CD4-positive, alpha-beta memory T cell (primary cell): ENCODE measurements at regions of chr5 and their contacts with region 1.

Region 1: GRCh38 chr5:141992349-141992963 is 20.4 kb downstream of the GNPDA1 start:
- DNase-seq: peak; percentile 67 to 74 (median 70)
- H3K4me3 ChIP-seq: no peak overlapping the region
- H3K4me3 Mint-ChIP-seq: no peak overlapping the region
- H3K27ac ChIP-seq: no peak overlapping the region
- H3K27ac Mint-ChIP-seq: peak overlapping the region in 3 of 7 donors; percentile 9 to 71 (median 60)
- H3K4me1 ChIP-seq: no peaks in the 10 kb centered on the region
- H3K4me1 Mint-ChIP-seq: peaks cover 3 to 7% (median 4%) of the 10 kb centered on the region in 4 donors
- H3K27me3 ChIP-seq: no peaks in the 10 kb centered on the region
- H3K27me3 Mint-ChIP-seq: no peaks in the 10 kb centered on the region

Region 2: DNA sequence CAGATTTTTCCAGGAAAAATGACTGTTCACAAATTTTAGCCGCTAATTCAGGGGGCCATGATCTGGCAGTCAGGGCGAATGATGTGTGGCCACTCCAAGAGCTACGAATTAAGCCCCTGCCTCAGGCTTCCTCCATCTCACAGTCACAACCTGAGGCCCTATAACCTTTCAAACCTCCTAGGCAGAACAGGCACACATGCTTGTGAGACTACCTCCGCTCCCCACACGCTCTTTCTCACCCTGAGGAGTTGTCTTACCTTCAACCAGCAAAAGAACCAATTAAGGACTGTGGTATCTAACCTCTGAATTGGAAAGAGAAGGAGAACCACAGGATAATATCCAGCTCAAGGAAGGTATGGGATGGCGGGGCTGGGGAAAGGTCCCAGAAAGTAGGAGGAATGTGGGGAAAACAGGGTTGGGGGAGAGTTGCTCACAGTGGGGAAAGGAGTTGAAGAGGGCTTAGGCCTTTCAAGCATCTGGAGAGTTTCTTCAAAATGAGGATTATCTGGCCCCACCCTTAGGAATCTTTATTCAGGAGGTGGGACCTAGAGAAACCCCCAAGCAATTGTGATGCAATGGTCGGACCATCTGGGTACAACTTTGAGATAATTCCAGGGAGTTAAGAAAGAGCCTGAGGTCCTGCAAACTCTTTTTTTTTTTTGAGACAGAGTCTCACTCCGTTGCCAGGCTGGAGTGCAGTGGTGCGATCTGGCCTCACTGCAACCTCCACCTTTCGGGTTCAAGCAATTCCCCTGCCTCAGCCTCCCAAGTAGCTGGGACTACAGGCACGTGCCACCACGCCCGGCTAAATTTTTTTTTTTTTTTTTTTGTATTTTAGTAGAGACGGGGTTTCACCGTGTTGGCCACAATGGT is 119.7 kb before region 1 on chr5:
- CTCF ChIA-PET with region 1: no interaction called
- POLR2A ChIA-PET with region 1: no interaction called
- intact Hi-C with region 1: no loop called
- DNase-seq: no peak
- H3K4me3 ChIP-seq: no peak overlapping the region
- H3K4me3 Mint-ChIP-seq: no peak overlapping the region
- H3K27ac ChIP-seq: no peak overlapping the region
- H3K27ac Mint-ChIP-seq: no peak overlapping the region
- H3K4me1 ChIP-seq: peaks cover 23% of the 10 kb centered on the region
- H3K4me1 Mint-ChIP-seq: peaks cover 11 to 21% (median 12%) of the 10 kb centered on the region in 4 donors
- H3K27me3 ChIP-seq: peaks cover 37% of the 10 kb centered on the region
- H3K27me3 Mint-ChIP-seq: peaks cover 40 to 67% of the 10 kb centered on the region in 2 donors

Region 3: GRCh38 chr5:142012792-142013388 is 20.4 kb after region 1 on chr5 and contains the start of gene GNPDA1:
- CTCF ChIA-PET with region 1: interaction called, 177 read pairs
- POLR2A ChIA-PET with region 1: interaction called, 7 read pairs
- intact Hi-C with region 1: loop called (anchors 1 kb)
- DNase-seq: peak; percentile 56 to 72 (median 62)
- H3K4me3 ChIP-seq: peak within 1 kb of the TSS; percentile 79 to 84
- H3K4me3 Mint-ChIP-seq: peak within 1 kb of the TSS; percentile 86 to 94 (median 88)
- H3K27ac ChIP-seq: peak within 1 kb of the TSS; percentile 70
- H3K27ac Mint-ChIP-seq: peak within 1 kb of the TSS; percentile 91 to 96 (median 95)
- H3K4me1 ChIP-seq: peaks cover 64% of the 10 kb centered on the region
- H3K4me1 Mint-ChIP-seq: peaks cover 44 to 71% (median 56%) of the 10 kb centered on the region in 4 donors
- H3K27me3 ChIP-seq: no peaks in the 10 kb centered on the region
- H3K27me3 Mint-ChIP-seq: no peaks in the 10 kb centered on the region
- total RNA-seq, gene GNPDA1: 23.0 to 24.1 TPM

Region 4: GRCh38 chr5:142134331-142135010 is 142.0 kb after region 1 on chr5:
- CTCF ChIA-PET with region 1: interaction called, 369 read pairs
- POLR2A ChIA-PET with region 1: interaction called, 4 read pairs
- intact Hi-C with region 1: no loop called
- DNase-seq: no peak
- H3K4me3 ChIP-seq: no peak overlapping the region
- H3K4me3 Mint-ChIP-seq: no peak overlapping the region
- H3K27ac ChIP-seq: no peak overlapping the region
- H3K27ac Mint-ChIP-seq: peak overlapping the region in 3 of 7 donors; percentile 19 to 70 (median 53)
- H3K4me1 ChIP-seq: peaks cover 25% of the 10 kb centered on the region
- H3K4me1 Mint-ChIP-seq: peaks cover 15 to 31% (median 17%) of the 10 kb centered on the region in 4 donors
- H3K27me3 ChIP-seq: no peaks in the 10 kb centered on the region
- H3K27me3 Mint-ChIP-seq: no peaks in the 10 kb centered on the region

Region 5: DNA sequence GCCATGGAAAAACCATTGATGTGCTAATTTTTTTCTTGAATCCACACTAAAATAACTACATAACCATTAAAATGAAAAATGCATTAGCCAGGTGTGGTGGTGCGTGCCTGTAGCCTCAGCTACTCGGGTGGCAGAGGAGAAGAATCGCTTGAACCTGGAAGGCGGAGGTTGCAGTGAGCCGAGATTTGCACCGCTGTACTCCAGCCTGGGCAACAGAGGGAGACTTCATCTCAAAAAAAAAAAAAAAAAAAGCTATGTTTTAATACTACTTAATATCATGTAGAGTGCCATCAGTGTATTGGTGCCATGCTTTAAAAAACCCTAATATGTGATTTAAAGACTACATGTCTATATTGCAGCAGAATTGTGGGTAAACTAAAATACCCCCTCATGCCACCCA is 175.0 kb after region 1 on chr5:
- CTCF ChIA-PET with region 1: no interaction called
- POLR2A ChIA-PET with region 1: no interaction called
- intact Hi-C with region 1: no loop called
- DNase-seq: no peak
- H3K4me3 ChIP-seq: no peak overlapping the region
- H3K4me3 Mint-ChIP-seq: no peak overlapping the region
- H3K27ac ChIP-seq: no peak overlapping the region
- H3K27ac Mint-ChIP-seq: no peak overlapping the region
- H3K4me1 ChIP-seq: no peaks in the 10 kb centered on the region
- H3K4me1 Mint-ChIP-seq: peaks cover 0 to 2% (median 0%) of the 10 kb centered on the region in 4 donors
- H3K27me3 ChIP-seq: no peaks in the 10 kb centered on the region
- H3K27me3 Mint-ChIP-seq: no peaks in the 10 kb centered on the region

Region 6: DNA sequence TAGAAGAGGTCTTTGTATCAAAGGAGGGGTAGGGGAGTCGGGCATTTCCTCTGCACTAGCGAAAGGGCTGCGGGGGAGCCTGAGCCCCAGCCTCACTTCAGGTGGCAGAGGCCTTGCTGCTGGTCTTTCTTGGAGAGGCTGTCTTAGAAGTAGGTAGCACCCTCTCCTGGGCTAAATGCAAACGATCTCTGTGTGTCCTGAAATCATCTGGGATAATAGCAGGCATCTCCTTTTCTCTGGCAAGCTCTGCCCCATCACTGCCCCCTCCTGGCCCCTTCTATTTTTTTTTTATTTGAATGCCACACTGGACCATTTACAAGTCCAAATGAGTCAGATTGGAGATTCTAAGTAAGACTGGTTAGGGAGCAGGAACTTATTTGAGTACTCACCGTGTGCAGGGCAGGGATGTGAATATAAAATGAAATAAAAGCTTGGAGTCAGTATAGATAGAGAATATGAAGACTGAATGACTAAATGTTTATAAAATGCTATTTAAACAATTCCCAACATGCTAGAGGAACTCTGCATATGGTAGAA is 556.4 kb after region 1 on chr5:
- CTCF ChIA-PET with region 1: interaction called, 3 read pairs
- POLR2A ChIA-PET with region 1: no interaction called
- intact Hi-C with region 1: loop called (anchors 5 kb)
- DNase-seq: peak; percentile 12 to 48 (median 26)
- H3K4me3 ChIP-seq: no peak overlapping the region
- H3K4me3 Mint-ChIP-seq: peak overlapping the region in 1 of 8 donors; percentile 21
- H3K27ac ChIP-seq: no peak overlapping the region
- H3K27ac Mint-ChIP-seq: no peak overlapping the region
- H3K4me1 ChIP-seq: no peaks in the 10 kb centered on the region
- H3K4me1 Mint-ChIP-seq: peaks cover 0 to 20% (median 6%) of the 10 kb centered on the region in 4 donors
- H3K27me3 ChIP-seq: peaks cover 8% of the 10 kb centered on the region
- H3K27me3 Mint-ChIP-seq: peaks cover 13 to 16% of the 10 kb centered on the region in 2 donors

Region 7: GRCh38 chr5:142769741-142770631 is 777.5 kb after region 1 on chr5 and contains the start of gene ARHGAP26:
- CTCF ChIA-PET with region 1: no interaction called
- POLR2A ChIA-PET with region 1: no interaction called
- intact Hi-C with region 1: no loop called
- DNase-seq: peak; percentile 87 to 91 (median 88)
- H3K4me3 ChIP-seq: peak within 1 kb of the TSS; percentile 74 to 89
- H3K4me3 Mint-ChIP-seq: peak within 1 kb of the TSS; percentile 94 to 98 (median 96)
- H3K27ac ChIP-seq: peak within 1 kb of the TSS; percentile 53
- H3K27ac Mint-ChIP-seq: peak within 1 kb of the TSS; percentile 85 to 97 (median 94)
- H3K4me1 ChIP-seq: peaks cover 14% of the 10 kb centered on the region
- H3K4me1 Mint-ChIP-seq: peaks cover 18 to 38% (median 26%) of the 10 kb centered on the region in 4 donors
- H3K27me3 ChIP-seq: no peaks in the 10 kb centered on the region
- H3K27me3 Mint-ChIP-seq: no peaks in the 10 kb centered on the region
- total RNA-seq, gene ARHGAP26: 22.6 to 22.7 TPM

Region 8: DNA sequence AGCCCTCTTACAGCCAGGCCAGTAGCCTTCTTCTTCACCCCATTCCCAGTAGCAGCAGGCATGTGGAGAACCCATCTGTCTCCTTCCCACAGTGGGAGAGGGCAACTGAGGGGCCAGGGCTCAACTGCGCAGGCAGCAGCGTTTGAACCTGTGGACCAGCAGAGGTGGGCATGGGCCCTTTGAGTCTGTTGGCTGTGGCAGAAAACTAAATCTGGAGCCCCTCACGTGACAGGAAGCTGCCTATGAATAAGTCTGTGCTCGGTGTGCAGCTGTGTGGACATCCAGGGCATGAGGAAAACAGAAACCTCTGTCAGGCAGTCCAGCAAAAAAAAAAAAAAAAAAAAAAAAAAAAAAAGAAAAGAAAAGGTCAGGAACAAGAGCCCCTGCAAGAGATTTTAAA is 1600.2 kb after region 1 on chr5:
- CTCF ChIA-PET with region 1: no interaction called
- POLR2A ChIA-PET with region 1: no interaction called
- intact Hi-C with region 1: no loop called
- DNase-seq: no peak
- H3K4me3 ChIP-seq: no peak overlapping the region
- H3K4me3 Mint-ChIP-seq: no peak overlapping the region
- H3K27ac ChIP-seq: no peak overlapping the region
- H3K27ac Mint-ChIP-seq: no peak overlapping the region
- H3K4me1 ChIP-seq: peaks cover 6% of the 10 kb centered on the region
- H3K4me1 Mint-ChIP-seq: peaks cover 0 to 8% (median 2%) of the 10 kb centered on the region in 4 donors
- H3K27me3 ChIP-seq: no peaks in the 10 kb centered on the region
- H3K27me3 Mint-ChIP-seq: no peaks in the 10 kb centered on the region